Head of caudate nucleus (tissue), 42 donors: ENCODE measurements at regions of chr15 and their contacts with region 1.

Region 1: DNA sequence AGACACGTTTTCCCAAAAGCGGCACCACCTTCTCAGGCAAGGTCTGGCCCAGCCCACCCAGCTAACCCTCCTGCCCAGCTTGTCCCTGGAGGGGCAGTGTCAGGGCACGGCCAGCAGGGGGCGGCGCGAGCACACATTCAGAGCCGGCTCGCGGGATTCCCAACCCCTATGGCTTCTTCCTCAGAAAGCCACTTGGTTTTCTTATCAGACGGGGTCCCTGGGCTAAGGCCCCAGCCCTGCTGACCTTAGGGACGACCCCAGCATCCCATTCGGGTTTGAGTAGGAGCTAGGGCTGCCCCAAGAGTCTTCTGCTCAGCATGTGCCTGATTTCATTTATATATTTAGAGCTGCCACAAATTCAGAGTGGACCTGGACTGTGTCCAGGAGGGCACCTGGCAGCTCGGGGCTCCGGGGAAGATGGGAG is 14.5 kb downstream of the RLBP1 start:
- DNase-seq: peak; percentile 77 to 93 (median 84)

Region 2: DNA sequence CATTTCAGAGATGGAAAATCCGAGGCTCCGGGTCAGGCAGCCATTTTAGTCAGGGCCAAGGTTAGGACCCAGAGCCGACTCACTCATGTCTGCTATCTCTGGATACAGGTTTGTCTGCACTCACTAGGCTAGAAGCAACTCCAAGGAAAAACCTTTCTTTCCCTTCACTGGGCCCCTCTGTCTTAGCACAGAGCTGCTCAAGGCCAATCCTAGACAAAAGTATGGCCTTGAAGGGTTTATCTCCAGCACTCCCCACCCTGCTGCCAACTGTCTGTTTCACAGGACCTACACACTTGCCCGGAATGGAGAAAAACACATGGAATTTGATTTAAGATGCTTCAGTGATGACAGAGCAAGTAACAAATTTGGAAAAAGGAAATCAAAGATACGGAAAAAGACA is 378.1 kb before region 1 on chr15:
- intact Hi-C with region 1: no loop called
- DNase-seq: no peak

Region 3: GRCh38 chr15:89230277-89230676 is 23.4 kb after region 1 on chr15:
- intact Hi-C with region 1: no loop called
- DNase-seq: no peak

Region 4: DNA sequence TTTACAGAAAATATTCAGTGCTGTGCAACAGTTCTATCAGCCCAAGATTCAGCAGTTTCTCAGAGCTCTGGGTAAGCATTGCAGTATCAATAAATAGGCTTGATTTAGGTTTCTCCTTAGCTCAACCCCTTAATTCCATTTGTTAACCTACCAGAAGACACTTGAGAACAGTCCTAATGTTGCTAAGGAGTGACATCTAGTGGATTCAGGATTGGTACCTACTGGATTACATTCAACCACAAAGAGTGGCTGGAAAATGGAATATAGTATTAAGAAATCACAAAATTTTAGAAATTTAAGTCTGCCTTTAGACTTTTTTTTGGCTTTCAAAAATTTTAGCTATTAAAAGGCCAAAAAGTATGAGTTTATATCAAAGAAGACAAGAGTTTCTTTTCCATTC is 93.0 kb after region 1 on chr15:
- intact Hi-C with region 1: loop called (anchors 5 kb)
- DNase-seq: peak in 1 of 42 donors; percentile 27

Region 5: GRCh38 chr15:89334510-89335288 is 127.8 kb after region 1 on chr15 and contains the start of gene POLG:
- intact Hi-C with region 1: loop called (anchors 10 kb)
- DNase-seq: peak; percentile 96 to 100 (median 99)

Region 6: DNA sequence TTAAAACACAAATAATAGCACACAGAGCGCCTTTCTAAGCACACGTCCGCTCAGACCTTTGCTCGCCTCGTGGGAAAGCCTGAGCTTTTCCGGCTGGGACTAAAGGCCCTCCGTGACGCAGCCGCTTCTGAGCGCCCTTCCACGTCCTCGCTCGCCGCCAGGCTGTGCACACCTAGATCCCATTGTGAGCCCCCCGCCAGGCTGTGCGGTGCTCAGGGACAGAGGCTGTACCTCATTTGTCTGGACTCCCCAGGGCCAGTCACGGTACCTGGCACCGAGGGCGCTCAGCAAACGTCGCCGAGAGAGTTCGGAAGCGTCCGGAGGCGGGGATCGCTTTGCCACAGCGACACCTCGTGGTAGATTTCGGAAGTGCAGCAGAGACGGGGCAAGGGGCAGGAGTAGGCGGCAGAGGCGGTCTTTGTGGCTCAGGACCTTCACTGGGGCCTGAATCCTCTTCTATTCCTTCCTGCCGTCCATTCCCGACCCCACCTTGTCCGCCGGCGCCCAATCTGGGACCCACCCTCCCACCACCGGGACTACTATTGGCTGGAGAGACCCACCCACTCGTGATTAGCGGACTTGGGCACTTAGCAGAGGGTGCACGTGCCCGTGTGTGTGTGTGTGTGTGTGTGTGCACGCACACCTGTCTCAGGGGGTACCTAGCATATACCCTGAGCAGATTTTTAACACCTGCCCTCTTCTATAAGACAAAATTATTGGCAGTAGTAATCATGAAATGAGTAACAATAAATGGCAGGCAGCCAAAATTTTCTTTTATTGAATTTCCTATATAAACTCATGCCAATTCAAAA is 223.8 kb after region 1 on chr15:
- intact Hi-C with region 1: loop called (anchors 10 kb)
- DNase-seq: peak; percentile 76 to 98 (median 92)

Region 7: GRCh38 chr15:89630974-89631901 is 424.3 kb after region 1 on chr15:
- intact Hi-C with region 1: no loop called
- DNase-seq: peak in 41 of 42 donors; percentile 26 to 85 (median 61)